ENCODE measurements at regions of chr22 and their contacts with region 1.

Region 1: GRCh38 chr22:33920927-33921524 is 750 bp upstream of the LARGE1 start:
- DNase-seq: peak; percentile 93 to 99
- H3K4me3 ChIP-seq: peak overlapping the region; percentile 50
- H3K4me1 ChIP-seq: peaks cover 16% of the 10 kb centered on the region
- H3K27me3 ChIP-seq: no peaks in the 10 kb centered on the region

Region 2: GRCh38 chr22:32080904-32081303 is 1840.1 kb before region 1 on chr22:
- in situ Hi-C with region 1: no loop called
- DNase-seq: peak; percentile 42 to 70
- H3K4me3 ChIP-seq: no peak overlapping the region
- H3K4me1 ChIP-seq: no peaks in the 10 kb centered on the region; the same call in 1 of the 2 replicates
- H3K27me3 ChIP-seq: peaks cover 9% of the 10 kb centered on the region

Region 3: GRCh38 chr22:34105461-34106062 is 184.5 kb after region 1 on chr22:
- in situ Hi-C with region 1: loop called (anchors 10 kb)
- DNase-seq: peak; percentile 40 to 77
- H3K4me3 ChIP-seq: no peak overlapping the region
- H3K4me1 ChIP-seq: no peaks in the 10 kb centered on the region
- H3K27me3 ChIP-seq: no peaks in the 10 kb centered on the region

Measured in HAP-1 (cell line).